ENCODE measurements at regions of chr10 and their contacts with region 1.

Region 1: DNA sequence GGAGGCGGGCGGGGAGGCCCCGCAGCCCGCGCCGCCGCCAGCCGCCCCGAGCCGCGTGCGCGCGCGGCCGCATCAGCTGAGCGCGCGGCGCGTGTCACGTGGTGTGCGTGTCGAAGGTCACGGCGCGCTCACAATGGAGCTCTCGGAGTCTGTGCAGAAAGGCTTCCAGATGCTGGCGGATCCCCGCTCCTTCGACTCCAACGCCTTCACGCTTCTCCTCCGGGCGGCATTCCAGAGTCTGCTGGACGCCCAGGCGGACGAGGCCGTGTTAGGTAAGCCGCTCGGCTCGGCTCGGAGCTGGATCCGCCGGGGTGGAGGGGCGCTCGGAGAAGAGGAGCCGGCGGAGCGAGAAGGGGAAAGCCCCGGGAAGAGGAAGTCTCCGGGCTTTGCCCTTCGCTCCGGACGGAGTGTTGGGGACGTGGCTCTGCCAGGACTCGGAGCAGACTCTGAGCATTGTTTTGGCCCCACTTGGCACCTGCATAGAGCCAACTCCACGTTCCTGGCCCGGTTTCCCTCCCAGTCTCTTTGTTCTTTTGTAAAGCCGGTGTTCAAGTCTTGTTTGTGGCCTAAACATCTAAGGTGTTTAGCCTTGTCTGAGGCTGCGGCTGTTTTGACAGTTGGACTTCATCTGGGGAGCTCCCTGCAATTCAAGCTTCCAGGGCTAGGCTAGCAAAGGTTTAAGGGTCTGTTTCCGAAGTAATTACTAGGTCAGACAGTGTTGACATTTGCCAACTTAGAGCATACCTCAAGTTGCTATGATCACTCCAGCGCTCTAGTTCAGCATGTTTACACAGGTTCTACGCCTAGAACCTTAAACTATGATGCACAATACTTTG is at the start of gene COMMD3:
- DNase-seq: peak; percentile 77
- H3K4me3 Mint-ChIP-seq: peak within 1 kb of the TSS; percentile 98
- H3K27ac Mint-ChIP-seq: peak within 1 kb of the TSS; percentile 100
- H3K4me1 Mint-ChIP-seq: peaks cover 50% of the 10 kb centered on the region
- H3K27me3 Mint-ChIP-seq: peaks cover 2% of the 10 kb centered on the region
- total RNA-seq, gene COMMD3: 78.7 and 84.4 TPM in 2 replicates

Region 2: DNA sequence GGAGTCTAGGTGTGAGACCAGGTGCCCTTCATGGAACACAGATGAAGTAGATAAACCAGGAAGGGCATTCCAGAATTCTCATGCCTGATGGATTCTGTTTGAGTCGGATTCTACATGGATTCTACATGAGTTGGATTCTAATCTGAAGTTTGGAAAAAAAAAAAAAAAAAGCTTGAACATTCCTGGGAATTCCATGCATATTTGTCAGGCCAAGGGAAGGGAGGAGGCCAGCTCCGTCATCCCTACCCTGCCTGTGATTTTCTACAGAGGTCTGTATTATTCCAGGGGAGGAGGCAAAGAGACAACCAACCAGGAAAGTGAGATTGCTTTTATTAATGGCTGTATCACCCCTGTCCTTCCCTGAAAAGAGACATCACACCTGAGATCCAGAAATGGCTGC is 70.9 kb before region 1 on chr10:
- intact Hi-C with region 1: loop called (anchors 1 kb)
- DNase-seq: no peak
- H3K4me3 Mint-ChIP-seq: no peak overlapping the region
- H3K27ac Mint-ChIP-seq: no peak overlapping the region
- H3K4me1 Mint-ChIP-seq: peaks cover 38% of the 10 kb centered on the region
- H3K27me3 Mint-ChIP-seq: no peaks in the 10 kb centered on the region

Region 3: DNA sequence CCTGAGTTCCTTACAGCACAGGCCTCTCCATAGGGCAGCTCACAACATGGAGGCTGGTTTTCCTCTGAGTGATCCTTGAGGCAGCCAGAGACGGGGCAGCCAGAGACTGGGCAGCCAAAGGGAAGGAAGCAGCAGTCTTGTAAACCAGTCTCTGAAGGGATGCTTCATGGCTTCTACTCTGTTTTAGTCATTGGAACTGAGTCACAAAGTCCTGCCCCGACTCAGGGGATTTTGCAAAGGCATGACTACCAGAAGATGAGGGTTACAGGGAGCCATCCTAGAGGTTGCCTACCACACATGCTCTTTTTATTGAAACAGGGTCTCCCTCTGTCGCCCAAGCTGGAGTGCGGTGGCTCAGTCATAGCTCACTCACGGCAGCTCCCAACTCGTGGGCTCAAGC is 44.7 kb before region 1 on chr10:
- intact Hi-C with region 1: no loop called
- DNase-seq: no peak
- H3K4me3 Mint-ChIP-seq: no peak overlapping the region
- H3K27ac Mint-ChIP-seq: no peak overlapping the region
- H3K4me1 Mint-ChIP-seq: peaks cover 4% of the 10 kb centered on the region
- H3K27me3 Mint-ChIP-seq: peaks cover 6% of the 10 kb centered on the region

Measured in activated T-helper 1 cell treated with anti-CD3 and anti-CD28 coated beads, Interleukin-12 subunit alpha, Interleukin-12 subunit beta, Interleukin-2, Interleukin-4 antibody, amounts not matched to agents 30 ng/mL and 10 ng/mL and 1 ng/mL, durations not matched to agents 14 hours and 24 hours and 36 hours (primary cell).